ENCODE measurements at regions of chr11 and their contacts with region 1.

Region 1: GRCh38 chr11:123301696-123302400 is 106.8 kb upstream of the CLMP start:
- DNase-seq: peak; percentile 94
- H3K4me3 Mint-ChIP-seq: peak overlapping the region; percentile 73
- H3K27ac Mint-ChIP-seq: peak overlapping the region; percentile 93
- H3K4me1 Mint-ChIP-seq: peaks cover 45% of the 10 kb centered on the region
- H3K27me3 Mint-ChIP-seq: no peaks in the 10 kb centered on the region

Region 2: DNA sequence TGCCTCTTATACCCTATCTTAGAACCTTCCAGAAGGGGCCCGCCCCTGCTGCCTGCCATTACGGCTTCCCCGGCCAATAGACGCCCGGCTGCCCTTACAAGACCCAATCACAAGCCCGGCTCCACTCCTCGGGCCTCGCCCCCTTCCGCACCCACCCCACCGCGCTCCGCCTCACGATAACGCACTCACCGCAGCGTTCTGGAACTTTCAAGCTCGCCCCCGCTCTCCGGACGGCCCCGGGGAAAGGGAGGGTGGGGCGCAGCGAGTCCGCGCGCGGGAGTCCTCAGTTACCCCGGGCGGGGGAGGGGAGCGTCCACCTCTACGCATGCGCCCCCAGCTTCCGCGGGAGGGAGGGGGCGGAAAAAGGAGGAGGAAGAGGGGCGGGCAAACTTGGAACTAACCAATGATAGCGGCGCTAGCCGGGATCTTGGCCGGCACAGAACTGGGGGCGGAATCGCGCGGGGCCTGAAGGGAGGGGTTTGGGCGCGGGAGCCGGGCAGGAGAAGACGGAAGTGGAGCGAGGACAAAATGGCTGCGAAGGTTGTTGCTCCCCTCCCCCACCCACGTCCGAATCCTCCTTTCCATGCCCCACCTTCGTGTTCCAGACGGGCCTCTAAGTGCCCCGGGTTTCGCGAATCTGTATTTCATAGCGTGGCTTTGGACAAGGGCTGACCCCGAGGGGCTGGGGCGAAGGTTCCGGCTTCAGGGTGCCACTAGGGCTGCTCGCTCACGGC is 239.5 kb before region 1 on chr11:
- intact Hi-C with region 1: loop called (anchors 2 kb)
- DNase-seq: peak; percentile 100
- H3K4me3 Mint-ChIP-seq: peak overlapping the region; percentile 100
- H3K27ac Mint-ChIP-seq: peak overlapping the region; percentile 99
- H3K4me1 Mint-ChIP-seq: peaks cover 46% of the 10 kb centered on the region
- H3K27me3 Mint-ChIP-seq: peaks cover 1% of the 10 kb centered on the region

Region 3: GRCh38 chr11:123357961-123358841 is 56.4 kb after region 1 on chr11:
- intact Hi-C with region 1: loop called (anchors 1 kb)
- DNase-seq: peak; percentile 88
- H3K4me3 Mint-ChIP-seq: peak overlapping the region; percentile 98
- H3K27ac Mint-ChIP-seq: peak overlapping the region; percentile 98
- H3K4me1 Mint-ChIP-seq: peaks cover 62% of the 10 kb centered on the region
- H3K27me3 Mint-ChIP-seq: no peaks in the 10 kb centered on the region

Region 4: DNA sequence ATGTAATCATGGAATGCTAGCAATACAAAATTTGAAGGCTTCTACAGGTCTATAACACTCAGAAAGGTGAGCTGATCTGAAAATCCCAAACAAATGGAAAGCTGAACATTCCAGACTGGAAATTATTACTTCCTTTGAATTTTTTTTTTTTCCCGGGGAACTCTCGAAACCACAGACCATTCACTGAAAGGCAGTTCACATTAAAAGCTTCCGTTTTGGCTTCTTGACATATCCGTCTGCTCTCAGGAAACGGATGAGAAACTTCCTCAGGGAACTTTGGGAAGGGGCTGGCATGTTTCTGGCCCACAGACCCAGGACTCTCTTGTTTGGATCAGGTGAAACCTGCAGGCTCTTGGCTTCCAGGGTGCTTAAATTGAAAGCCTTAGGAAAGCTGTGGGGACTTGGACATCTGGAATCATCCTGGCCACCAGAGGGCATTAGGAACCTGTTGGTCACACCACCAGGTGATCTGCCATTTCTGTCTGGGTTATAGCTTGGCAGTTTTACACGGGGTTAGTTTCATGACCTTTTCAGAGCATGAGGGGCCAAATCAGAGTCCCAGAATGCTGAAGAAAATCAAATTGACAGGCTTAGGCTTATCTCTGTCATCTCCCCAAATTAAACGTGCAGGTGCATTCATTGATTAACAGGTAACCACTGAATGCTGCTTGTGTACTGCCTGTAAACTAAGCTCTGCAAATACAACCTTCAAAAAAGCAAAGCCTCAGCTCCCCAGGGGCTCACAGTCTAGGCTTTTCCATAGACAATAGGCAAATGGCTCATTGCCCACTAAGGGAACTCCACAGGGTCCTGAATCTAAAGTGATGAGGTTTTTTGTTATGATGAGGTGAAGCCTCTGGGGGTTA is 105.5 kb after region 1 on chr11:
- intact Hi-C with region 1: loop called (anchors 1 kb)
- DNase-seq: peak; percentile 88
- H3K4me3 Mint-ChIP-seq: peak overlapping the region; percentile 85
- H3K27ac Mint-ChIP-seq: peak overlapping the region; percentile 77
- H3K4me1 Mint-ChIP-seq: peaks cover 53% of the 10 kb centered on the region
- H3K27me3 Mint-ChIP-seq: no peaks in the 10 kb centered on the region

Region 5: DNA sequence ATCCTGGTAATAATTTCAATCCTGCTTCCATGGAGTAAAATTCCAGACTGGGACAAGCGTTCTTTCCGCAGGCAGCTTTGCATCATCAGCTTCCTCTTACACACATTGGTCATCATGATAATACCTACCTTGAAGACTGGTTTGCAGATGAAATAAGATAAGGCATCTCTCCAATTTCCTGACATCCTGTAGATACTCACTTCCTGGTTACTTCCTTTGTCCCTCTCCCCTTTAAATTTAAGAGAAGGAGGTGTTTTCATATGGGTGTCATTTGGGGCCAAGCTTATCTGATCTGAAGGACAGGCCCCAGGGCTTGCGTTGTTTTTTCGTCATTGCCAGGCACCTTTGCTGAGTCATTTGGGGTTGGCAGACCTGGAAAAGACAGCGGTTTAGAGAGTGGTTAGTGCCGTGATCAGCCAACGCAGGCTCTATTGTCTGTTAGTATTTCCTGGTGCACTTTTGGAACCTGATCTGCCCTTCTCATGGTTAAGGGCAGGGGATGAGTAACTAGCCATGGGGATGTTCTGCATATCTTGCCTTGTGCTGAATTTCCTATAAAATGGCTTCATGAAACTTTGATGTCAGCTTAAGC is 152.3 kb after region 1 on chr11:
- intact Hi-C with region 1: loop called (anchors 1 kb)
- DNase-seq: peak; percentile 91
- H3K4me3 Mint-ChIP-seq: peak overlapping the region; percentile 82
- H3K27ac Mint-ChIP-seq: peak overlapping the region; percentile 94
- H3K4me1 Mint-ChIP-seq: peaks cover 79% of the 10 kb centered on the region
- H3K27me3 Mint-ChIP-seq: no peaks in the 10 kb centered on the region

Region 6: DNA sequence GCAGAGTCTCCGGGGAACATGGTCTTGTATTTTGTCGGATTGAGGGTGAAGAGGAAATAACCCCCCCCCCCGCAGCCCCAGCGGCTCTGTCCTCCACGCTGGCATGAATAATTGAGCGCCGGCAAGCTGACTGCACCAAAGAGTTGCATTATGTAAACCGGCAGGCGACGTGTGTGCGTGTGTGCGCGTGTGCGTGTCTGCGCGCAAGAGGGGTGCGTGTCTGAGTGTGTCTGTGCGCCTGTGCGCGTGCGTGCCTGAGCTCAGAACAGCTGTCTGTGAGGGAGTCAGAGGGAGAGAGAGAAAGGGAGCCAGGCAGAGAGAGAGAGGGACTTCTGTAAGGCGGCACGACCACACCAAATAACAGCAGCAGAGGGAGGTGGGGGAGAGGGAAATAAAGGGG is 258.2 kb after region 1 on chr11:
- intact Hi-C with region 1: loop called (anchors 1 kb)
- DNase-seq: peak; percentile 79
- H3K4me3 Mint-ChIP-seq: peak overlapping the region; percentile 75
- H3K27ac Mint-ChIP-seq: peak overlapping the region; percentile 86
- H3K4me1 Mint-ChIP-seq: peaks cover 25% of the 10 kb centered on the region
- H3K27me3 Mint-ChIP-seq: no peaks in the 10 kb centered on the region